Endothelial cell of umbilical vein (primary cell): ENCODE measurements at regions of chr11 and their contacts with region 1.

Region 1: GRCh38 chr11:118145285-118146227 is 7.1 kb downstream of the SCN4B start:
- DNase-seq: peak; percentile 59
- H3K4me3 ChIP-seq: peak overlapping the region; percentile 19 to 44 (median 43)
- H3K27ac ChIP-seq: no peak overlapping the region
- H3K4me1 ChIP-seq: no peaks in the 10 kb centered on the region
- H3K27me3 ChIP-seq: peaks cover 40 to 47% of the 10 kb centered on the region in 2 experiments
- CTCF ChIP-seq: peak; percentile 86 to 90
- POLR2A ChIP-seq: no peak

Region 2: GRCh38 chr11:118126082-118126838 is 19.3 kb before region 1 on chr11:
- CTCF ChIA-PET with region 1: no interaction called
- POLR2A ChIA-PET with region 1: no interaction called
- dilution Hi-C with region 1: no loop called
- intact Hi-C with region 1: no loop called
- DNase-seq: no peak
- H3K4me3 ChIP-seq: no peak overlapping the region
- H3K27ac ChIP-seq: no peak overlapping the region
- H3K4me1 ChIP-seq: no peaks in the 10 kb centered on the region
- H3K27me3 ChIP-seq: peaks cover 8 to 10% of the 10 kb centered on the region in 2 experiments
- CTCF ChIP-seq: no peak
- POLR2A ChIP-seq: no peak

Region 3: GRCh38 chr11:118290923-118291322 is 145.4 kb after region 1 on chr11:
- CTCF ChIA-PET with region 1: interaction called, 5 read pairs
- POLR2A ChIA-PET with region 1: no interaction called
- dilution Hi-C with region 1: no loop called
- intact Hi-C with region 1: loop called (anchors 1 kb)
- DNase-seq: peak; percentile 68
- H3K4me3 ChIP-seq: no peak overlapping the region
- H3K27ac ChIP-seq: no peak overlapping the region
- H3K4me1 ChIP-seq: no peaks in the 10 kb centered on the region
- H3K27me3 ChIP-seq: no peaks in the 10 kb centered on the region
- CTCF ChIP-seq: peak; percentile 30 to 53
- POLR2A ChIP-seq: no peak

Region 4: GRCh38 chr11:118353084-118353710 is 207.6 kb after region 1 on chr11:
- CTCF ChIA-PET with region 1: interaction called, 4 read pairs
- POLR2A ChIA-PET with region 1: no interaction called
- dilution Hi-C with region 1: no loop called
- intact Hi-C with region 1: loop called (anchors 1 kb)
- DNase-seq: peak; percentile 25
- H3K4me3 ChIP-seq: no peak overlapping the region
- H3K27ac ChIP-seq: no peak overlapping the region
- H3K4me1 ChIP-seq: no peaks in the 10 kb centered on the region
- H3K27me3 ChIP-seq: peaks cover 6 to 13% of the 10 kb centered on the region in 2 experiments
- CTCF ChIP-seq: peak; percentile 33 to 38
- POLR2A ChIP-seq: no peak